ENCODE measurements at regions of chr1 and their contacts with region 1.

Region 1: GRCh38 chr1:22416555-22417454 is 34.8 kb upstream of the ZBTB40 start:
- DNase-seq: peak; percentile 80
- H3K4me3 ChIP-seq: no peak overlapping the region
- H3K27ac ChIP-seq: no peak overlapping the region
- H3K4me1 ChIP-seq: no peaks in the 10 kb centered on the region
- H3K27me3 ChIP-seq: peaks cover 6% of the 10 kb centered on the region
- CTCF ChIP-seq: peak; percentile 83

Region 2: GRCh38 chr1:22131875-22132486 is 284.8 kb before region 1 on chr1:
- intact Hi-C with region 1: loop called (anchors 2 kb)
- DNase-seq: peak; percentile 61
- H3K4me3 ChIP-seq: no peak overlapping the region
- H3K27ac ChIP-seq: no peak overlapping the region
- H3K4me1 ChIP-seq: no peaks in the 10 kb centered on the region
- H3K27me3 ChIP-seq: no peaks in the 10 kb centered on the region
- CTCF ChIP-seq: peak; percentile 84

Region 3: GRCh38 chr1:22275721-22276395 is 140.9 kb before region 1 on chr1:
- intact Hi-C with region 1: loop called (anchors 10 kb)
- DNase-seq: peak; percentile 68
- H3K4me3 ChIP-seq: no peak overlapping the region
- H3K27ac ChIP-seq: no peak overlapping the region
- H3K4me1 ChIP-seq: no peaks in the 10 kb centered on the region
- H3K27me3 ChIP-seq: no peaks in the 10 kb centered on the region
- CTCF ChIP-seq: peak; percentile 83

Region 4: DNA sequence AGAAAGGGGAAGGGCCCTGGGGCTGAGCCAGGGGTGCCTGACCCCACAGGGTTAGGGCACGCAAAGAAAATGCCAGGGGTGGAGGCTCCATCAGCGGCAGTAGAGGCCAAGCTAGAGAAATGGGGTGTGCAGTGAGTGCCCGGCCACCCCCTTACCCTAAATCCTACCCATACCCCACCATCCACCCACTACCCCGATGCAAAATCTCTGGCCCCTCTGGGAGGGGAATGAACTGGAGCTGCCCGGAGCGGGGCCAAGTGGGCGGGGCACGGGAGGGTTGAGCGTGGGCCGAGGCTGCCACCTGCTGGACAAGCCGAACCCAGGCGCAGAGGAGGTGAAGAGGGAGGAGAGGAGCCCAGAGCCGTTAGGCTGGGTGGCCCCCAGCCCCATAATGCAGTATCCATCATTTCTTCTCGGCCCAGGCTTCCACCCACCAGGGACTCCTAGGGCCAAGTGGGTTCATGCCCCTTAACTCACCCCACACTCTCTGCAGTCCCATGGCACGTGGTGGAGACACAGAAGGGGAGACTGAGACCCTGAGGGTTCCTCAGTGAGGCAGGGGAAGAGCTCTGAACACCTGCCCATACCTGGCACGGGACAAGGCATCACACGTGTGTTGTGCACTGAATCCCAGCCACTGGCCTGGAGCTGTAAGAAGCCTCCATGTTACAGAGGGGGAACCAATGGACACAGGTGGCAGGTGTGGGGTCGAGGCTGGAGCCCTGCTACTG is 225.3 kb after region 1 on chr1:
- intact Hi-C with region 1: loop called (anchors 1 kb)
- DNase-seq: peak; percentile 83
- H3K4me3 ChIP-seq: no peak overlapping the region
- H3K27ac ChIP-seq: no peak overlapping the region
- H3K4me1 ChIP-seq: no peaks in the 10 kb centered on the region
- H3K27me3 ChIP-seq: no peaks in the 10 kb centered on the region
- CTCF ChIP-seq: peak; percentile 90